ENCODE measurements at regions of chr15 and their contacts with region 1.

Region 1: DNA sequence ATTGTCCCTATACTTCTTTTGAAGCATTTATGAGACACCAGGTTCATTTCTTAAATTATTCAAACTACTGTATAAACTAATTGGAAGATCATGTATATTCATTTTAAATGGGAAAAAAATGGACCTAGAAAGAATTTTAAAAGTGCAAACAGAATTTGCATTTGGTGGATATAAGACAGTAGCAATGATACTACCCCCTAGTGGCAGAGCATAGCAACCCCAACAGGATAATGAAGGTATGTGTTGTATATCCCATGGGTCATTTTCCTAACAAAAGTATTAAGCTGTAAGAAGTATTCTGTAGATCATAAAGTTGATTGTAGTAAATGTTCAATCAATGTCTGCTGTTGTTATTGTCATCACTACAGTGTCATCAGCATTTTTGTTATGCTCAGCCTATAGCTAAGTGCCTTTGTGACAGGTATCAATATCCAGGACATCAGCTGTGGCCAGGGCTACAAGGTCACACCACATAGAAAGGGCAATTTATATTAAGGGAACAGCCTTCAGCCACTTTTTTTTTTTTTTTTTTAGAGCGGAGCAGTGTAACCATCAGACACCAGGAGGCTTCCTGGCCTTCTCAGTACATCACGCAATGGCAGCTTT is 175.8 kb downstream of the FOXB1 start:
- DNase-seq: peak; percentile 16
- ATAC-seq: peak; percentile 83
- H3K4me3 ChIP-seq: no peak overlapping the region
- H3K27ac ChIP-seq: no peak overlapping the region
- H3K4me1 ChIP-seq: no peaks in the 10 kb centered on the region
- H3K27me3 ChIP-seq: peaks cover 35% of the 10 kb centered on the region
- CTCF ChIP-seq: peak; percentile 38 to 92 (median 88); a peak in 5 of 6 replicates
- POLR2A ChIP-seq: no peak
- RAD21 ChIP-seq: peak; percentile 54

Region 2: DNA sequence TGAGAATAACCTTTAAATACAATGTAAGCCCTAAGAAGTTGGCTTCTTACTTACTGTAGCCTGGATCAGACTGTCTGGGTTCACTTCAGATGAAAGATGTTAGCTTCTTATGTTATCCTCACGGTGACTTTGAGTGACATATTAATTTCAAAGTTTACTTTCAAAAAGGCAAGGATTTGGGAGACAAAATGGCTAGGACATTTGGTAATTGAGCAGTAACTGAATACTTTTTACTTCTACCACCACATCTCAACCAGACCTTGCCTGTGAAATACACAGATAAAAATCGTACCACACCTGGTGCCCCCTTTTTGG is 454.8 kb before region 1 on chr15:
- CTCF ChIA-PET with region 1: interaction called, 5 read pairs
- POLR2A ChIA-PET with region 1: no interaction called
- RAD21 ChIA-PET with region 1: interaction called in 1 of 2 experiments, 3 read pairs
- intact Hi-C with region 1: loop called (anchors 10 kb)
- DNase-seq: no peak
- ATAC-seq: no peak
- H3K4me3 ChIP-seq: no peak overlapping the region
- H3K27ac ChIP-seq: no peak overlapping the region
- H3K4me1 ChIP-seq: peaks cover 6 to 7% of the 10 kb centered on the region in 2 experiments; a peak in 3 of 4 replicates
- H3K27me3 ChIP-seq: peaks cover 25% of the 10 kb centered on the region
- CTCF ChIP-seq: no peak
- POLR2A ChIP-seq: no peak
- RAD21 ChIP-seq: no peak

Region 3: DNA sequence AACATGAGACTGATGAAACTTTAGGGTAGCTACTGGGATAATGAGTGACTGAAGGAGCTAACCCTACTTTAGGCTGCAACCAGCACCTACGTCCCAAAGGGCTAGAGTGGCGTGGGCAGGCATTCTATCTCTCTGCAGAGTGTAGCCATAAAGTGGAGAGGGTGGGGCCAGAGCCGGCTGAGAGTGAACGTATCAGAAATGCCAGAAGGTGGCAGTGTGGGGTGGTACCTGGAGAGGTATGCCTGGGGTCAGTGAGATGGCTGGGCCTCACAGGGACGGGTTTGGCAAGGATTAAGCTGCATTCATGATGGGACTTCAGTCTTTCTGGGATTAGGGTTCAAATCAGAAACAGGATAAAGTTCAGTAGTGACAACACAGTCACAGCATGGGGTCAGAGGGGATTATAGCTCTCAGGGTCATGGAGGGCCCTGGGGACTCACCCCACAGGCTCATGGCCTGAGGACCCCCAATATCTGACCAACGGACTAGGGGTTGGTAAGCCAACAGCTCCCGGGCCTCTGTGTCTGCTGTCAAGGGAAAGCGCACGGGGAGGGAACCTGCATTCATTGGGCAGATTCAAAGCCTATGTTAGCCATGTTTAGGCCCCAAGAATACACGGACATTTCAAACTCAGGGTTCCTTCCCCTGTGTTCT is 262.3 kb before region 1 on chr15:
- CTCF ChIA-PET with region 1: interaction called, 11 read pairs
- POLR2A ChIA-PET with region 1: no interaction called
- RAD21 ChIA-PET with region 1: no interaction called
- intact Hi-C with region 1: loop called (anchors 1 kb)
- DNase-seq: peak; percentile 22
- ATAC-seq: peak; percentile 100
- H3K4me3 ChIP-seq: no peak overlapping the region
- H3K27ac ChIP-seq: no peak overlapping the region
- H3K4me1 ChIP-seq: no peaks in the 10 kb centered on the region
- H3K27me3 ChIP-seq: peaks cover 33% of the 10 kb centered on the region
- CTCF ChIP-seq: peak; percentile 29 to 71 (median 69); a peak in 5 of 6 replicates
- POLR2A ChIP-seq: no peak
- RAD21 ChIP-seq: peak; percentile 50

Region 4: DNA sequence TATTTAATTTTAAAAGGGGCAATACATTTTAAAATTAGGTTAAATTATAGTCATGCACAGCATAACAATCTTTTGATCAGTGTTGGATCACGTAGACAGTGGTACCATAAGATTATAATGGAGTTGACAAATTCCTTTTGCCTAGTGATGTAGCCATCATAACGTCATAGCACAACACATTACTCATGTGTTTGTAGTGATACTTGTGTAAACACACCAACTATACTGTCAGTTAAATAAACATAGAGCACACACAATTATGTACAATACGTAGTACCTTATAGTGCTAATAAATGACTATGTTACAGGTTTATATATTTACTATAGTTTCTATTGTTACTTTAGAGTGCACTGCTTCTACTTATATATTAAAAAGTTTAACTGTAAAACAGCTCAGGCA is 144.5 kb before region 1 on chr15:
- CTCF ChIA-PET with region 1: no interaction called
- POLR2A ChIA-PET with region 1: no interaction called
- RAD21 ChIA-PET with region 1: no interaction called
- intact Hi-C with region 1: no loop called
- DNase-seq: no peak
- ATAC-seq: no peak
- H3K4me3 ChIP-seq: no peak overlapping the region
- H3K27ac ChIP-seq: no peak overlapping the region
- H3K4me1 ChIP-seq: no peaks in the 10 kb centered on the region
- H3K27me3 ChIP-seq: peaks cover 45% of the 10 kb centered on the region
- CTCF ChIP-seq: no peak
- POLR2A ChIP-seq: no peak
- RAD21 ChIP-seq: no peak

Region 5: DNA sequence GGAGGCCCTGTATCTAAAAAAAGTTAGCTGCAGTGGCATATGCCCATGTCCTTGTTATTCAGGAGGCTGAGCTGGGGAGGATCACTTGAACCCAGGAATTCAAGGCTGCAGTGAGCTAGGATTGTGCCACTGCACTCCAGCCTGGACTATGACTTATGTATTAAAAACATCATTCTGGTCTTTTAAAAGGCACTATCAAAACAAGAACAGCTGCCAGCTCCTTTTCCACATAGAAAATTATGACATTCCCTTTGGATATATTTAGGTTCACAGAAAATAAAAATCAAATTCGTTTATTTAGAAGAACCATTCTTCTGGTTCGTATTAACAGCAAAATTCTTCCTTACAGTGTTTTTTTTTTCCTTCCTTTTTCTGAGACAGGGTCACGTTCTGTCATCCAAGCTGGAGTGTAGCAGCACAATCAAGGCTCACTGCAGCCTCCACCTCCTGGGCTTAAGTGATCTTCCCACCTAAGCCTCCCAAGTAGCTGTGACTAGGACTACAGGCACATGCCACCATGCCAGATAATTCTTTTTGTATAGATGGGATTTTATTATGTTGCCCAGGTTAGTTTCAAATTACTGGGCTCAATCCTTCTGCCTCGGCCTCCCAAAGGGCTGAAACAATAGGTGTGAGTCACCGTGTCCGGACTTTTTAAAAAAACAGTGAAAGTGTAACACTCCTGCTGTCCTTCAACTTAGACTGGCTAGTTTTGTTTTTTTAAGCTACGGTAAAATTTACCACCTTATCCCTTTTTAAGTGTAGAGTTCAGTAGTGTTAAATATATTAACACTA is 285.1 kb after region 1 on chr15:
- CTCF ChIA-PET with region 1: no interaction called
- POLR2A ChIA-PET with region 1: no interaction called
- RAD21 ChIA-PET with region 1: no interaction called
- intact Hi-C with region 1: no loop called
- DNase-seq: no peak
- ATAC-seq: peak; percentile 40; the same call in 1 of the 2 replicates
- H3K4me3 ChIP-seq: no peak overlapping the region
- H3K27ac ChIP-seq: no peak overlapping the region
- H3K4me1 ChIP-seq: peaks cover 0 to under 1% of the 10 kb centered on the region in 2 experiments; a peak in 1 of 4 replicates
- H3K27me3 ChIP-seq: no peaks in the 10 kb centered on the region
- CTCF ChIP-seq: no peak
- POLR2A ChIP-seq: no peak
- RAD21 ChIP-seq: no peak

Measured in HCT116 (cell line).